ENCODE measurements at regions of chr9 and their contacts with region 1.

Region 1: GRCh38 chr9:7467186-7467585 is 332.4 kb downstream of the DMAC1 start:
- DNase-seq: no peak
- H3K4me3 Mint-ChIP-seq: no peak overlapping the region
- H3K27ac Mint-ChIP-seq: no peak overlapping the region
- H3K4me1 Mint-ChIP-seq: no peaks in the 10 kb centered on the region
- H3K27me3 Mint-ChIP-seq: peaks cover 16% of the 10 kb centered on the region

Region 2: DNA sequence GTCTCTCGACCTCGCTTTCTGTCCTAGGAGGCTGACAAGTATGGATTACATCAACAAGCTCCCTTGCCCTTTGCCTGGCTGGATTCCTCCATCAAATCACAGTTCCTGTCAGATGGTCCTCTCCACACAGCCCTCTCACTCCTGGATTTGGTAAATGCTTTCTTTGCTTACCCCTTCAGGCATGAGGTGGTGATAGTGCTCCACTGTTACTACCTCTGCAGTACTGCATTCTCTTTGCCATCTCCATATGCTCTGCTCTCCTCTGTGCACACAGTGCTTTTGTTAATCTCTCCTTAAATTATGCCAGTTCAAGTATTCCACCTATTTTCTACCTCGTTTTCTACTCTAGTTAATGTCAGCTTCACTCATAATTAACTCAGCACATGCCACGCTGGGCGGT is 53.2 kb after region 1 on chr9:
- intact Hi-C with region 1: loop called (anchors 10 kb)
- DNase-seq: no peak
- H3K4me3 Mint-ChIP-seq: no peak overlapping the region
- H3K27ac Mint-ChIP-seq: no peak overlapping the region
- H3K4me1 Mint-ChIP-seq: no peaks in the 10 kb centered on the region
- H3K27me3 Mint-ChIP-seq: peaks cover 26% of the 10 kb centered on the region